ENCODE measurements at regions of chr3 and their contacts with region 1.

Region 1: DNA sequence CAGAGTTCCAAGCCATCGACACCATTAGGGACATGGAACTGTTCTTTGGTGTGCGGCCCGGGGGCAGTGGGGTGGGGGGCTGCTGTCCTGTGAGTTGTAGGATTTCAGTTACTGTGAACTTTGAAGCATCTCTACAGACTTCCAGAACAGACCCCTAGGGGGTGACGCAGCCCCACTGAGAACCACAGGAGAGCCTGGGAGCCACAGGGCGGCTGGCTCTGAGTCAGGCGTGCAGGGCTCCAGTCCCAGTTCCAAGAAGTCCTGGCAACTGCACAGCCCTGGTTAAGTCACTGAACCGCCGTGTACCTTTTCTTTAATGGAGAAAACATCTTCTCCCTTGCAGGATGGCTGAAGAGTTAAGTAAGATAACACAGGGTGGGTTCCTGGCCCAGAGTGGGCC is 23.5 kb upstream of the LRTM1 start:
- DNase-seq: peak; percentile 86 to 92
- ATAC-seq: peak; percentile 96 to 100 (median 98)
- H3K4me3 ChIP-seq: no peak overlapping the region
- H3K27ac ChIP-seq: no peak overlapping the region
- H3K4me1 ChIP-seq: peaks cover 14% of the 10 kb centered on the region
- H3K27me3 ChIP-seq: no peaks in the 10 kb centered on the region
- CTCF ChIP-seq: peak; percentile 75

Region 2: GRCh38 chr3:54859184-54859583 is 92.2 kb before region 1 on chr3:
- intact Hi-C with region 1: loop called in 1 of 2 experiments (anchors 5 kb)
- DNase-seq: no peak
- ATAC-seq: peak in 3 of 4 donors; percentile 40 to 55 (median 53)
- H3K4me3 ChIP-seq: no peak overlapping the region
- H3K27ac ChIP-seq: no peak overlapping the region
- H3K4me1 ChIP-seq: no peaks in the 10 kb centered on the region
- H3K27me3 ChIP-seq: no peaks in the 10 kb centered on the region
- CTCF ChIP-seq: no peak

Region 3: DNA sequence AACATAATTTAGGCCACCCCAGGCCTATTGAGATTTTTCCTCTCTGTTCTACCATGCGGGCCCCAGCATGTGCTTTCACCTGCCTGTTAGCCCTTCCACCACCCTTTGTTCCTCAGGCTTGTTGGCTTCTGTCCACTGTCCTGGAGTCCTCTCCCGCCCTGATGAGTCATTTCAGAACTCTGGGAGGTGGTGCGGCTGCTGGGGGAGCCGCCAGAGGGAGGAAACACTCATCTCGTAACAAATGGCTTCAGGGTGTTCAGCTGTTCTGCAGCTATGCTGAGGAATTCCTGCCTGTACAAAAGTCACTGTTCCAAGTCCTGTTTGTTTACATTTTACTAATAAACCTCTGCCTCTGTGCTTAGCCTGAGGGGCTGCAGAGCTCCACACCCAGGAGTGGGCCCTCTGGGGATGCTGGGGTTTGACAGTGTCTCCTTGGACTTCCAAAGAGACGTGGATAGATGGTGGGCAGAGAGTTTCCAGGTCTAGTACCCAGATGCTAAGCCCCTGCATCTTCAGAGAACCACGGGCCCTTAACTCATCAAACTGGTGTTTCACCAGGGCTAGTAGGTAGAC is 59.8 kb before region 1 on chr3:
- intact Hi-C with region 1: loop called in 1 of 2 experiments (anchors 5 kb)
- DNase-seq: peak; percentile 78 to 91
- ATAC-seq: peak; percentile 97 to 99 (median 98)
- H3K4me3 ChIP-seq: no peak overlapping the region
- H3K27ac ChIP-seq: peak overlapping the region; percentile 82
- H3K4me1 ChIP-seq: peaks cover 22% of the 10 kb centered on the region
- H3K27me3 ChIP-seq: no peaks in the 10 kb centered on the region
- CTCF ChIP-seq: peak; percentile 56

Region 4: DNA sequence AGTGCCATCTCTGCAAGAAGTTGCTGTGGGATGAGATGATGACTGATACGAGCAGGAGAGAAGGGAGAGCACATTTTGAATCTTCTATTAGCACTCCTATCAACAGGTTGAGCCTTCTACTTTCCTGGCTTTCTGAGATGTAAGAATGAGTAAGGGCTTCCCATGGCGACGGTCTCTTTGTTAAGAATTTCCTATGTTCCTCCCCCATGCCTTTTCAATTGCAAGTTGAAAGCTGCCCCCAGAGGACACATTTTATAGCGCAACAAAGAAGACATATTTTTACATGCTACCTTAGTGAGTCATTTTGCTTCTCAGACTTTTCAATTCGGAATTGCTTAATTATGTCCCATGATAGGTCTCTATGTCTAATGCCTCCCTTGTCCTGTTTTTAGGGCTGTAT is 47.8 kb after region 1 on chr3:
- intact Hi-C with region 1: no loop called
- DNase-seq: no peak
- ATAC-seq: no peak
- H3K4me3 ChIP-seq: no peak overlapping the region
- H3K27ac ChIP-seq: no peak overlapping the region
- H3K4me1 ChIP-seq: no peaks in the 10 kb centered on the region
- H3K27me3 ChIP-seq: no peaks in the 10 kb centered on the region
- CTCF ChIP-seq: no peak

Region 5: GRCh38 chr3:55105647-55106046 is 154.2 kb after region 1 on chr3:
- intact Hi-C with region 1: no loop called
- DNase-seq: no peak
- ATAC-seq: no peak
- H3K4me3 ChIP-seq: no peak overlapping the region
- H3K27ac ChIP-seq: no peak overlapping the region
- H3K4me1 ChIP-seq: no peaks in the 10 kb centered on the region
- H3K27me3 ChIP-seq: no peaks in the 10 kb centered on the region
- CTCF ChIP-seq: no peak

Region 6: GRCh38 chr3:55180936-55181535 is 229.6 kb after region 1 on chr3:
- intact Hi-C with region 1: loop called (anchors 2 to 5 kb)
- DNase-seq: no peak
- ATAC-seq: peak in 1 of 4 donors; percentile 53
- H3K4me3 ChIP-seq: no peak overlapping the region
- H3K27ac ChIP-seq: no peak overlapping the region
- H3K4me1 ChIP-seq: no peaks in the 10 kb centered on the region
- H3K27me3 ChIP-seq: no peaks in the 10 kb centered on the region
- CTCF ChIP-seq: peak; percentile 79

Region 7: GRCh38 chr3:56157693-56158362 is 1206.4 kb after region 1 on chr3:
- intact Hi-C with region 1: no loop called
- DNase-seq: peak in 1 of 2 donors; percentile 15
- ATAC-seq: peak in 1 of 4 donors; percentile 51
- H3K4me3 ChIP-seq: no peak overlapping the region
- H3K27ac ChIP-seq: no peak overlapping the region
- H3K4me1 ChIP-seq: no peaks in the 10 kb centered on the region
- H3K27me3 ChIP-seq: peaks cover 0 to 2% (median 0%) of the 10 kb centered on the region in 3 donors
- CTCF ChIP-seq: no peak